ENCODE measurements at regions of chr7 and their contacts with region 1.

Region 1: DNA sequence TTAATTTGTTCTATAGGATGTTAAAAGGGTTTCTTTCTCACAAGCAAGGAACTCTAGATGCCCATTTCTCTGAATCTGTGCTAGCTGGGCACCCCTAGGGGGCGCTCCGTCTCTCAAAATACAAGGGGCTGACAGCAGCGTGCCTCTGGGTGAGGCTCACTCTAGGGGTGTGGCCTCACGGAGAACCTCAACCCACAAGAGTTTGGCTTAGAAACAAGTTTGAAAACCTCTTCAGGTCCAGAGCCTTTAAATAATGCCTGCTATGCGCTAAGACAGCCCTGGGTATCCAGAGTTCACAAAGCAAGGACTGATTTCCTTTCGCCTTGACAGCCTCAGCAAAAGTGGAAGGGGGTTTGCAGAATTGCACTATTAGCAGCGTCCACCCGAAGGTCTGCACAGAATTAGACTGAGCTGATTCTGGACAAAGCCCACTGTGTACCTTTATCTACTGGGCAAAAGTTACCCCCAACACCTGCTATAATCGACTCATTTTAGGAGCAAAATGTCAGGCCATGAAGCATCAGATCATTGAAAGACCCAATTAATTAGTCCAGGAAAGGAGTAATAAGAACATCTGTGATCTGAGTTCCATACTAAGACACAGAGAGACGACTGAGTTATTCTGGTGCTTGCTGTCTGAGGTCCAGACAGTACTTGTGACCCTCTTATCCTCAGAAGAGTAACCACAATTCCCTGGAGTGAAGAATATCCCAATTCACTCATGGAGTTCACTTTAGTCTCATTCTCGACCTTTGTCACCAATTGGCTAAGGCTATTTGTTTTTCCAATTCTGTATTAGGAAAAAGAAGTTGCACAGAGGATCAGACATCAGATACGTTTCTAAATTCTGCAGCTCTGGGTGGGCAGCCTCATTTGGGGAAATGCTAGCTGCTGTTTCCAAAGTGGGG is 574 bp upstream of the CPED1 start:
- DNase-seq: peak; percentile 81 to 88 (median 86)
- H3K4me3 ChIP-seq: peak overlapping the region in 1 of 2 donors; percentile 22
- H3K4me3 Mint-ChIP-seq: peak overlapping the region; percentile 61 to 82 (median 75)
- H3K27ac ChIP-seq: no peak overlapping the region
- H3K27ac Mint-ChIP-seq: peak overlapping the region in 1 of 7 donors; percentile 15
- H3K4me1 ChIP-seq: peaks cover 15% of the 10 kb centered on the region
- H3K4me1 Mint-ChIP-seq: peaks cover 13 to 20% (median 15%) of the 10 kb centered on the region in 4 donors
- H3K27me3 ChIP-seq: peaks cover 39% of the 10 kb centered on the region
- H3K27me3 Mint-ChIP-seq: peaks cover 30 to 34% of the 10 kb centered on the region in 2 donors

Region 2: DNA sequence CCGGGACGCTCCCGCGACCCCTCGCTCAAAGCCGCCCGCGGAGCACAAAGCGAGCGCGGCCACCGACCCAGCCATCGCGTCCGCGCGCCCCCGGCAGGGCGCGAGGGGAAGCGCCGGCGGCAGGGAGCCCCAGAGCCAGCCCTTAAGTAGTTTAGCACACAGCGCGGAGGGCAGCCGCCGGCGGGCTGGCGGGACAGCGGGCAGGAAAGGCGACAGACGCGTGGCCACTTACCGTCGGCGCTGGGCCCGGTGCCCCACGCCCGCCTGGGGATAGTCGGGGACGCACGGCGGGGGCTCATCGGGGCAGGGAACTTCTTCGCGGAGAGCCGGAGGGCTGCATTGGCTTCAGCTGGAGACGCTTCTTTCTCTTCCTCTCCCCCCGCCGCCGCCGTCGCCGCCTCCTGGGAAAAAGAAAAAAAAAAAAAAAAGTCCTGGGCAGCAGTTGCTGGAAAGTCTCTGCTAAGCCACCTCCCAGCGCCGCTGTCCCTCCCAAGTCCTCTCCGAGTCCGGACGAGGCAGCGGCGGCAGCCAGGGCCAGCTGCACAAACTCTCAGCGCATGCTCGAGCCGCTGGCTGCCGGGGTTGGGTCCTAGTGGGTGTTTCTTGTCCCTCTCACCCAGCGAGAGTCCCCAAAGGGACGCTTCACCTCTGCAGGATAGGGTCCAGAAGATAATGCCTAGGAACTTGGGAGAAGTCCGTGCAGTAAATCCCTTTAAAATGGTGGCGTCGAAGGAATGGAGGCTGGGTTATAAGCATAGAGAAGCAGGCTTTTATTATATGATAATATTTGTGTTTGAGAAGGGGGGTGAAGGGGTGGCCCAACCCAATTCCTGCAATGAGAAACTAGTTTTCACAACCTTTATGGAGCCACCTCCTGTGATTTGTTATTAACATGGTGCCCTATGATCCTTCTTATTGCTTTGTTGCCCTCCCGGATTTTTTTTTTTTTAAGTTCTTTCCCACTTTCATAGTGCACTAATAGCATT is 130.1 kb before region 1 on chr7 and contains the start of gene TSPAN12:
- CTCF ChIA-PET with region 1: no interaction called
- POLR2A ChIA-PET with region 1: no interaction called
- intact Hi-C with region 1: no loop called
- DNase-seq: peak; percentile 25 to 38 (median 34)
- H3K4me3 ChIP-seq: peak within 1 kb of the TSS; percentile 8 to 32
- H3K4me3 Mint-ChIP-seq: peak within 1 kb of the TSS; percentile 81 to 96 (median 90)
- H3K27ac ChIP-seq: no peak within 1 kb of the TSS
- H3K27ac Mint-ChIP-seq: no peak within 1 kb of the TSS
- H3K4me1 ChIP-seq: peaks cover 13% of the 10 kb centered on the region
- H3K4me1 Mint-ChIP-seq: peaks cover 9 to 17% (median 12%) of the 10 kb centered on the region in 4 donors
- H3K27me3 ChIP-seq: peaks cover 15% of the 10 kb centered on the region
- H3K27me3 Mint-ChIP-seq: peaks cover 32 to 53% of the 10 kb centered on the region in 2 donors
- total RNA-seq, gene TSPAN12: not detected

Region 3: GRCh38 chr7:120950539-120951308 is 37.2 kb before region 1 on chr7 and contains the start of gene ING3:
- CTCF ChIA-PET with region 1: interaction called, 6 read pairs
- POLR2A ChIA-PET with region 1: interaction called, 5 read pairs
- intact Hi-C with region 1: loop called (anchors 1 kb)
- DNase-seq: peak; percentile 98 to 99 (median 98)
- H3K4me3 ChIP-seq: peak within 1 kb of the TSS; percentile 80 to 93
- H3K4me3 Mint-ChIP-seq: peak within 1 kb of the TSS; percentile 91 to 99 (median 96)
- H3K27ac ChIP-seq: peak within 1 kb of the TSS; percentile 99
- H3K27ac Mint-ChIP-seq: peak within 1 kb of the TSS; percentile 98 to 99 (median 99)
- H3K4me1 ChIP-seq: peaks cover 27% of the 10 kb centered on the region
- H3K4me1 Mint-ChIP-seq: peaks cover 13 to 33% (median 19%) of the 10 kb centered on the region in 4 donors
- H3K27me3 ChIP-seq: no peaks in the 10 kb centered on the region
- H3K27me3 Mint-ChIP-seq: peaks cover 7 to 14% of the 10 kb centered on the region in 2 donors
- total RNA-seq, gene ING3: 24.1 to 26.5 TPM

Region 4: GRCh38 chr7:121081327-121081936 is 93.5 kb after region 1 on chr7:
- CTCF ChIA-PET with region 1: interaction called, 101 read pairs
- POLR2A ChIA-PET with region 1: interaction called, 8 read pairs
- intact Hi-C with region 1: loop called (anchors 1 kb)
- DNase-seq: peak in 4 of 5 donors; percentile 39 to 51 (median 44)
- H3K4me3 ChIP-seq: no peak overlapping the region
- H3K4me3 Mint-ChIP-seq: no peak overlapping the region
- H3K27ac ChIP-seq: no peak overlapping the region
- H3K27ac Mint-ChIP-seq: no peak overlapping the region
- H3K4me1 ChIP-seq: no peaks in the 10 kb centered on the region
- H3K4me1 Mint-ChIP-seq: no peaks in the 10 kb centered on the region
- H3K27me3 ChIP-seq: no peaks in the 10 kb centered on the region
- H3K27me3 Mint-ChIP-seq: peaks cover 12 to 14% of the 10 kb centered on the region in 2 donors

Region 5: GRCh38 chr7:121099572-121099971 is 111.6 kb after region 1 on chr7:
- CTCF ChIA-PET with region 1: interaction called, 16 read pairs
- POLR2A ChIA-PET with region 1: no interaction called
- intact Hi-C with region 1: no loop called
- DNase-seq: no peak
- H3K4me3 ChIP-seq: no peak overlapping the region
- H3K4me3 Mint-ChIP-seq: no peak overlapping the region
- H3K27ac ChIP-seq: no peak overlapping the region
- H3K27ac Mint-ChIP-seq: no peak overlapping the region
- H3K4me1 ChIP-seq: no peaks in the 10 kb centered on the region
- H3K4me1 Mint-ChIP-seq: no peaks in the 10 kb centered on the region
- H3K27me3 ChIP-seq: no peaks in the 10 kb centered on the region
- H3K27me3 Mint-ChIP-seq: peaks cover 3% of the 10 kb centered on the region in 2 donors

Region 6: GRCh38 chr7:121107923-121108498 is 120.1 kb after region 1 on chr7:
- CTCF ChIA-PET with region 1: interaction called, 43 read pairs
- POLR2A ChIA-PET with region 1: interaction called, 3 read pairs
- intact Hi-C with region 1: loop called (anchors 1 kb)
- DNase-seq: peak in 4 of 5 donors; percentile 47 to 56 (median 54)
- H3K4me3 ChIP-seq: no peak overlapping the region
- H3K4me3 Mint-ChIP-seq: no peak overlapping the region
- H3K27ac ChIP-seq: no peak overlapping the region
- H3K27ac Mint-ChIP-seq: no peak overlapping the region
- H3K4me1 ChIP-seq: no peaks in the 10 kb centered on the region
- H3K4me1 Mint-ChIP-seq: no peaks in the 10 kb centered on the region
- H3K27me3 ChIP-seq: no peaks in the 10 kb centered on the region
- H3K27me3 Mint-ChIP-seq: peaks cover 3 to 10% of the 10 kb centered on the region in 2 donors

Measured in CD4-positive, alpha-beta memory T cell (primary cell).